Ovary (tissue), 10 donors: ENCODE measurements at regions of chr13 and their contacts with region 1.

Region 1: GRCh38 chr13:101474419-101474957 is 22.0 kb downstream of the ITGBL1 start:
- DNase-seq: peak in 1 of 5 donors; percentile 63
- H3K4me3 ChIP-seq: no peak overlapping the region
- H3K27ac ChIP-seq: no peak overlapping the region
- H3K4me1 ChIP-seq: no peaks in the 10 kb centered on the region
- H3K27me3 ChIP-seq: no peaks in the 10 kb centered on the region
- CTCF ChIP-seq: no peak
- EP300 ChIP-seq: no peak
- POLR2A ChIP-seq: no peak

Region 2: GRCh38 chr13:101144808-101145419 is 329.6 kb before region 1 on chr13:
- intact Hi-C with region 1: loop called in 2 of 4 experiments (anchors 10 kb)
- DNase-seq: no peak
- H3K4me3 ChIP-seq: no peak overlapping the region
- H3K27ac ChIP-seq: no peak overlapping the region
- H3K4me1 ChIP-seq: no peaks in the 10 kb centered on the region
- H3K27me3 ChIP-seq: no peaks in the 10 kb centered on the region
- CTCF ChIP-seq: peak in 2 of 3 donors; percentile 23 to 65
- EP300 ChIP-seq: no peak
- POLR2A ChIP-seq: no peak

Region 3: GRCh38 chr13:101492251-101492910 is 17.9 kb after region 1 on chr13:
- intact Hi-C with region 1: loop called in 1 of 4 experiments (anchors 1 kb)
- DNase-seq: no peak
- H3K4me3 ChIP-seq: no peak overlapping the region
- H3K27ac ChIP-seq: no peak overlapping the region
- H3K4me1 ChIP-seq: no peaks in the 10 kb centered on the region
- H3K27me3 ChIP-seq: no peaks in the 10 kb centered on the region
- CTCF ChIP-seq: no peak
- EP300 ChIP-seq: no peak
- POLR2A ChIP-seq: no peak